ENCODE measurements at regions of chr4 and their contacts with region 1.

Region 1: GRCh38 chr4:139453371-139454110 is 380 bp upstream of the RAB33B start:
- DNase-seq: peak; percentile 99
- H3K4me3 Mint-ChIP-seq: peak overlapping the region; percentile 92
- H3K27ac Mint-ChIP-seq: peak overlapping the region; percentile 96
- H3K4me1 Mint-ChIP-seq: peaks cover 49% of the 10 kb centered on the region
- H3K27me3 Mint-ChIP-seq: no peaks in the 10 kb centered on the region

Region 2: GRCh38 chr4:139083956-139084803 is 369.4 kb before region 1 on chr4:
- intact Hi-C with region 1: loop called (anchors 1 kb)
- DNase-seq: peak; percentile 95
- H3K4me3 Mint-ChIP-seq: peak overlapping the region; percentile 100
- H3K27ac Mint-ChIP-seq: peak overlapping the region; percentile 100
- H3K4me1 Mint-ChIP-seq: peaks cover 30% of the 10 kb centered on the region
- H3K27me3 Mint-ChIP-seq: peaks cover 2% of the 10 kb centered on the region

Region 3: DNA sequence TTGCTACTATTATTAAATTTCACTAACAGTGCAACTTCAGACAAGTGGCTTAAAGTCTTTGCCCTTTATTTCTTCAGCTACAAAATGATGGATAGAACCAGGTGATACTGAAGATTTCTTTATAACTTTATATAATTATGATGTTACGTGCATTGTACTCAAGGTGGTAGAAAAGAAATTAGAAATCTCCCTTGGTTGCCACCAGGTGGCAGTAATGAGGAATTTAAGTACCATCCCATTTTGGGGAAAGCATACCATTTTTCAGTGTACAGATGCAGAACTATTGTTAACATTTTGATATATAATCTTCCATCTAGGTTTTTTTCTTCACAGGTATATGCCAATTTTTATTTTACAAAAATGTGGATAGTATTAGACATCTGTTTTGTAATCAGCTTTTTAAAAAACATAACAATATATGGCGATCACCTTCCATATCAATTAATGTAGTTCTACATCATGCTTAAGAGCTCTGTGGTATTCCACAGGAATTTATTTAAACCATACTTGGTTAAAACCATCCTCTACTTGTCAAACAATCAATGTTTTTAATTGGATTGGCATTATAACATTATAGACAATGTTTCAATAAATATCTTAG is 37.4 kb before region 1 on chr4:
- intact Hi-C with region 1: loop called (anchors 2 kb)
- DNase-seq: peak; percentile 74
- H3K4me3 Mint-ChIP-seq: no peak overlapping the region
- H3K27ac Mint-ChIP-seq: no peak overlapping the region
- H3K4me1 Mint-ChIP-seq: peaks cover 17% of the 10 kb centered on the region
- H3K27me3 Mint-ChIP-seq: no peaks in the 10 kb centered on the region

Region 4: GRCh38 chr4:139483000-139483399 is 29.5 kb after region 1 on chr4:
- intact Hi-C with region 1: no loop called
- DNase-seq: no peak
- H3K4me3 Mint-ChIP-seq: no peak overlapping the region
- H3K27ac Mint-ChIP-seq: no peak overlapping the region
- H3K4me1 Mint-ChIP-seq: no peaks in the 10 kb centered on the region
- H3K27me3 Mint-ChIP-seq: peaks cover 2% of the 10 kb centered on the region

Region 5: GRCh38 chr4:140373328-140374129 is 920.0 kb after region 1 on chr4 and contains the start of gene SCOC:
- intact Hi-C with region 1: loop called (anchors 10 kb)
- DNase-seq: peak; percentile 99
- H3K4me3 Mint-ChIP-seq: no peak within 1 kb of the TSS
- H3K27ac Mint-ChIP-seq: peak within 1 kb of the TSS; percentile 65
- H3K4me1 Mint-ChIP-seq: peaks cover 24% of the 10 kb centered on the region
- H3K27me3 Mint-ChIP-seq: no peaks in the 10 kb centered on the region
- total RNA-seq, gene SCOC: 33.7 and 33.8 TPM in 2 replicates